ENCODE measurements at regions of chr2 and their contacts with region 1.

Region 1: DNA sequence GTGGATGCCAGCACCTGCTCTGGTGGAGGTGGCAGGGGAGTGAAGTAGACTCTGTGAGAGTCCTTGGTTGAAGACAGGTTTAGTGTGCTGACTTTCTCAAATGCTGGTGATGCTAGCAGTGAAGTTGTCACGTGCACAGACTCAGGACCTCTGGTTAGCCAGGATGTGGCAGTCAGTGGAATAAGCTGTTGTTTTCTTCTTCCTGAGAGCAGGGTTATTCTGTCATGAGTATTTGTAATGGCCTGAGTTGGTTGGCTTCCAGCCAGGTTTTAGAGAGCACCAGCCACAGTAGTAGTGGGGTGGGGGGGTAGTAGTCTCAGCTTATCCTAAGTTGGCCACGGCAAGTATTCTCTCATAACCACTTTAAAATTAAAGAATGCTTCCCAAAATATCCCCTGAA is 238.5 kb upstream of the FBXO11 start:
- DNase-seq: peak; percentile 25 to 78 (median 36)
- ATAC-seq: peak; percentile 60
- H3K4me3 ChIP-seq: no peak overlapping the region
- H3K27ac ChIP-seq: no peak overlapping the region; the same call in 2 of the 3 replicates
- H3K4me1 ChIP-seq: peaks cover 10 to 33% of the 10 kb centered on the region in 2 experiments; a peak in 4 of 5 replicates
- H3K27me3 ChIP-seq: no peaks in the 10 kb centered on the region
- CTCF ChIP-seq: no peak
- EP300 ChIP-seq: no peak
- POLR2A ChIP-seq: no peak
- RAD21 ChIP-seq: no peak

Region 2: GRCh38 chr2:47946593-47946992 is 198.2 kb before region 1 on chr2:
- CTCF ChIA-PET with region 1: no interaction called
- POLR2A ChIA-PET with region 1: no interaction called
- in situ Hi-C with region 1: no loop called
- intact Hi-C with region 1: no loop called
- DNase-seq: no peak
- ATAC-seq: no peak
- H3K4me3 ChIP-seq: no peak overlapping the region
- H3K27ac ChIP-seq: no peak overlapping the region
- H3K4me1 ChIP-seq: no peaks in the 10 kb centered on the region
- H3K27me3 ChIP-seq: peaks cover 7 to 13% of the 10 kb centered on the region in 2 experiments; a peak in 3 of 5 replicates
- CTCF ChIP-seq: no peak
- EP300 ChIP-seq: no peak
- POLR2A ChIP-seq: no peak
- RAD21 ChIP-seq: no peak

Region 3: DNA sequence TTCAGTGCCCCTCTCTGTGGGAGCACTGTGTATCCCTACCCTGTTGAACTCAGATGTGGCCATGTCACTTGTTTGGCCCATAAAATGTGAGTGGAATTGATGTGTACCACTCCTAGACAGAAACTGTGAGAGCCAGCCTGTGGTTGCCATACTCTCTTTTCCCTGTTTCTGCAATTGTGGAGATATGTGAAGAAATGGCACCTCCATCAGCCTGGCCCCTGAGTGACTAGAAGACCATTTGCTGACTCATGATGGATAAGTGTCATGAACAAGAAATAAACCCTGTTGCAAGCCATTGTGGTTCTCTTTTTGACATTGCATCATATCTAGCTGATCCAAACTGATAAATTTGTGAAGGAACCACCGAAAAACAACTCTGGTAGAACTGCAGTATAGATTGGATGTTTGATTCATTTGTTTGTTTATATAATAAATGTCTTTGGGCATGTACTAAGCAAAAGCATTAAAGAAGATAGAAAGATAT is 24.0 kb before region 1 on chr2:
- CTCF ChIA-PET with region 1: no interaction called
- POLR2A ChIA-PET with region 1: interaction called, 4 read pairs
- in situ Hi-C with region 1: no loop called
- intact Hi-C with region 1: loop called (anchors 2 kb)
- DNase-seq: peak in 3 of 4 experiments; percentile 26 to 67 (median 64)
- ATAC-seq: peak; percentile 89
- H3K4me3 ChIP-seq: no peak overlapping the region
- H3K27ac ChIP-seq: peak overlapping the region; percentile 62; the same call in 2 of the 3 replicates
- H3K4me1 ChIP-seq: peaks cover 5% of the 10 kb centered on the region in 2 experiments; a peak in 2 of 5 replicates
- H3K27me3 ChIP-seq: no peaks in the 10 kb centered on the region
- CTCF ChIP-seq: no peak
- EP300 ChIP-seq: peak; percentile 90
- POLR2A ChIP-seq: no peak
- RAD21 ChIP-seq: peak in 1 of 2 experiments; percentile 34; a peak in 3 of 4 replicates

Region 4: GRCh38 chr2:48157150-48157549 is 12.4 kb after region 1 on chr2:
- CTCF ChIA-PET with region 1: no interaction called
- POLR2A ChIA-PET with region 1: interaction called, 10 read pairs
- in situ Hi-C with region 1: no loop called
- intact Hi-C with region 1: no loop called
- DNase-seq: no peak
- ATAC-seq: no peak
- H3K4me3 ChIP-seq: no peak overlapping the region
- H3K27ac ChIP-seq: no peak overlapping the region
- H3K4me1 ChIP-seq: no peaks in the 10 kb centered on the region
- H3K27me3 ChIP-seq: no peaks in the 10 kb centered on the region
- CTCF ChIP-seq: no peak
- EP300 ChIP-seq: no peak
- POLR2A ChIP-seq: no peak
- RAD21 ChIP-seq: no peak